ENCODE measurements at regions of chr3 and their contacts with region 1.

Region 1: GRCh38 chr3:69013253-69014021 is at the start of gene EOGT:
- DNase-seq: peak; percentile 90
- H3K4me3 Mint-ChIP-seq: peak within 1 kb of the TSS; percentile 77
- H3K27ac Mint-ChIP-seq: peak within 1 kb of the TSS; percentile 72
- H3K4me1 Mint-ChIP-seq: peaks cover 32% of the 10 kb centered on the region
- H3K27me3 Mint-ChIP-seq: no peaks in the 10 kb centered on the region
- total RNA-seq, gene EOGT: 9.3 to 12.0 TPM

Region 2: GRCh38 chr3:68996356-68996995 is 17.0 kb before region 1 on chr3:
- CTCF ChIA-PET with region 1: interaction called, 7 read pairs
- POLR2A ChIA-PET with region 1: interaction called, 3 read pairs
- intact Hi-C with region 1: loop called (anchors 1 kb)
- DNase-seq: peak; percentile 50
- H3K4me3 Mint-ChIP-seq: no peak overlapping the region
- H3K27ac Mint-ChIP-seq: peak overlapping the region; percentile 56
- H3K4me1 Mint-ChIP-seq: peaks cover 21% of the 10 kb centered on the region
- H3K27me3 Mint-ChIP-seq: no peaks in the 10 kb centered on the region

Region 3: GRCh38 chr3:69033470-69033869 is 20.0 kb after region 1 on chr3:
- CTCF ChIA-PET with region 1: interaction called, 3 read pairs
- POLR2A ChIA-PET with region 1: no interaction called
- intact Hi-C with region 1: loop called (anchors 2 kb)
- DNase-seq: peak; percentile 30
- H3K4me3 Mint-ChIP-seq: no peak overlapping the region
- H3K27ac Mint-ChIP-seq: peak overlapping the region; percentile 65
- H3K4me1 Mint-ChIP-seq: peaks cover 16% of the 10 kb centered on the region
- H3K27me3 Mint-ChIP-seq: no peaks in the 10 kb centered on the region

Region 4: DNA sequence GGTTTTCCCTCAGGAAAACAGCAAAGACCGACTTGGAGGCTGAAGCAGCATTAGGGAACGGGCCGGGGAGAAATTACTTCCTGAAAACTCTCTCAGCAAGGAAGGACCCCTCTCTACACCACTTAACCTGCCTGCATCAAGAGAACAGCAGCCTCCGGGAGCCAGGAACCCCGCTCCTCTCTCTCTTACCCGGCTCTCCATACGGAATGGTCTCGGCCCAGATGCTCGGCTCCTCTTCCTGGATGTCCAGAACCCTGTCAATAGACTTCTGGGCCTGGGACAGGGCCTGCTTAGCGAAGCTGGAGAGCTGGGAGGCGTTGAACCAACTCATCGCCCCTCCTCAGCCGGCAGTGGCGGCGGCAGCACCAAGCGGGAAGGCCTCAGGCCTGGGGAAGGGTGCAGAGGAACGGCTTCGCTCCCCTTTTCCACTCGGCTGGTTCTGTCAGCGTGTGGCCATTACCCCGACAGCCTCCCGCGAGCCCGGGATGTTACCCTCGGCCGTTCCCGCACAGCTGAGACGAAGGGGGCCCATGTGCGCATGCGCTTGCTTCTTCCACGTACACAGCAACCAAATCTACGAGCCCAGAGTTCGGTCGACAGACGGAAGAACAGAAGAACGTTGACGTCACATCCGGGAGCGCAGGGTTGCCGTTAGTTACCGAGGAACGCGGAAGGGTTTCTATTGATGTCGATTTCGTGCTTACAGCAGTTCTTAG is 38.5 kb after region 1 on chr3 and contains the start of gene TMF1:
- CTCF ChIA-PET with region 1: interaction called, 4 read pairs
- POLR2A ChIA-PET with region 1: interaction called, 4 read pairs
- intact Hi-C with region 1: loop called (anchors 1 kb)
- DNase-seq: peak; percentile 99
- H3K4me3 Mint-ChIP-seq: peak within 1 kb of the TSS; percentile 98
- H3K27ac Mint-ChIP-seq: peak within 1 kb of the TSS; percentile 97
- H3K4me1 Mint-ChIP-seq: peaks cover 33% of the 10 kb centered on the region
- H3K27me3 Mint-ChIP-seq: peaks cover 2% of the 10 kb centered on the region
- total RNA-seq, gene TMF1: 37.1 to 42.1 TPM